Posterior vena cava (tissue), 2 donors: ENCODE measurements at regions of chr13 and their contacts with region 1.

Region 1: DNA sequence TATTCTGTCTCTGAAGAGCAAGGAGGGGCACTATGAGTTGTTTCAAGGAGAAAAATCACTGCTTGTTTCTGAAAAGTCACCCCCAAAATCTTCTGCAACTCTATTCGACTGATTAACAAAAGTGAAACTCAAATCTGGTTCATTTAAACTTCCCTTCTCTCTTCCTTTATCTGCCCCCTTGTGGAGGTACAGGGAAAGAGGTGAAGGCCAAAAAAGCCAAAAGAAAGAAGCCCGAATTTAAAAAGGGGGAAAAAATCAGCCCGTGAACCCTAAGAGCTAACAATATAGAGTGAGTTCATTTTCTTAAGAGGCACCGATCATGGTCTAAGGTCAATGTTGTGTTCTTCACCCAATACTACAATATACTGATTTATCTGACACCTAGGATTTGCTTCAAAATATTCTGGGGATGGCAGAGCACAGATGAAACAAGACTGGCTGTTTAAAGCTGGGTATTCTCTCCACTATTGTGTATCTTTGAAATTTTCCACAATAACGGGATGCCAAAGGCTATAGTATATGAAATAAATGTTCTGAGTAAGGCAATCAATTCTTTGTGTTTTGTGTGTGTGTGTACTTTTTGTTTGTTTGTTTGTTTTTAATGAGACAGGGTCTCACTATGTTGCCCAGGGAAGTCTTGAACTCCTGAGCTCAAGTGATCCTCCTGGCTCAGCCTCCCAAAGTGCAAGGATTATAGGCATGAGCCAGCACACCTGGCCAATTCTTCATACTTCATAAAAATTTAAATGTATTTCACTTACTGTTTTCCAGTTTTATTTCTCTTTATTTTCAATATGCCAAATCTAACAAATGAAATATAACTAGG is 55.0 kb upstream of the EEF1AKMT1 start:
- DNase-seq: no peak

Region 2: GRCh38 chr13:20495082-20496023 is 333.4 kb before region 1 on chr13:
- intact Hi-C with region 1: loop called in 1 of 2 experiments (anchors 10 kb)
- DNase-seq: no peak

Region 3: DNA sequence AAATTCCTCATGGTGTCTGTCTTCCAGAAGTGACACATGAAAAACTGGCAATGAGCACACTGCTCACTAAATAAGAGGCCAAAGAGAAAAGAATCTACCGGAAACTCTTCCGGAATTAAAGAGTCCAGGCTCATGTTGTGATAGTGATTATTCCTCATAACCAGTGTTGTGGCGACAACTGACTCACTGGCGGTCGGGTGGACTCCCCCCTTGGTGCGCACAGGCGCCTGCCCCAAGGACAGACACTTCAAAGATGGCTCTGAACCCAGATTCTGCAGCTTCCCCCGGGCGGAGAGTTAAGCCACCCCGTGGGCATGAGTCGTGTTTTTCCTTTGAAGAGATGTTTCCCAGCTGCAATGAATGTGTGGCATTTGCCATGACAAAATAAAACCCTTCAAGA is 115.0 kb before region 1 on chr13:
- intact Hi-C with region 1: loop called in 1 of 2 experiments (anchors 5 kb)
- DNase-seq: peak; percentile 91

Region 4: DNA sequence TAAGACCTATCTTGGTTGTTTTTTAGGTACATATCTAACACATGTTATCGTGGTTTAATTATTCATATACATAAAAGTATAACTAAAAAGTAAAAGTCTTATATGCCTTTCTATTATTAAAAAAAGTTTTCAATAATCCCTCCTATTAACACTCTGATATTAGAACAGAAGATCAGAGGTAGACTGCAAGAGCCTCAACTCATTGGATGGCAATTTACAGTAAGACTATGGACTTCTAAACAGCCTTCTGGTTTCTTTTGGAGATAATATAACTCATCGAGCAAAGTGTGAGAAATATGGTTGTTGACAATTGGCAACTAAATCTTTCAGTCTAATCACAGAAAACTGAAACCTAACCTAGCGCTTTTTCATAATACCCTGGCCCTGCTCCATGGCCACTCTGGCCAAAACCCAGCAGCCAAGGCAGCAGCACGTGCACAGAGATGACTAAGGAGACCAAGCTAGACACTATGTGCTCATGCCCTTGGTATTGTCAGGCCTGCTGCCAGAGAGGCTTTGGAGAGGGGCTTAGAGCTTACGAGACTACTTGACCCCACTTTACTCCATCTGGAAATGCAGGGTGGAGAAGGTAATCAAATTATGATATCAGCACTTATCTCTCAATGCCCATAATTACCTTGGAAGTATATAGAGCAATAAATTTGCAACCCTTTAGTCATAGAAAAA is 14.4 kb before region 1 on chr13:
- intact Hi-C with region 1: no loop called
- DNase-seq: peak; percentile 96